Activated CD8-positive, alpha-beta T cell treated with anti-CD3 and anti-CD28 coated beads, Interleukin-2, amount 10 ng/mL, durations not matched to agents 7 days and 5 days (primary cell): ENCODE measurements at regions of chr21 and their contacts with region 1.

Region 1: GRCh38 chr21:37257967-37258877 is 8.9 kb downstream of the VPS26C start:
- DNase-seq: peak; percentile 94
- ATAC-seq: peak; percentile 86
- H3K4me3 Mint-ChIP-seq: peak overlapping the region; percentile 83
- H3K27ac Mint-ChIP-seq: peak overlapping the region; percentile 93
- H3K4me1 Mint-ChIP-seq: peaks cover 68% of the 10 kb centered on the region
- H3K27me3 Mint-ChIP-seq: no peaks in the 10 kb centered on the region

Region 2: GRCh38 chr21:37130971-37131370 is 127.3 kb before region 1 on chr21:
- CTCF ChIA-PET with region 1: no interaction called
- POLR2A ChIA-PET with region 1: no interaction called
- DNase-seq: no peak
- ATAC-seq: no peak
- H3K4me3 Mint-ChIP-seq: no peak overlapping the region
- H3K27ac Mint-ChIP-seq: no peak overlapping the region
- H3K4me1 Mint-ChIP-seq: peaks cover 10% of the 10 kb centered on the region
- H3K27me3 Mint-ChIP-seq: no peaks in the 10 kb centered on the region

Region 3: DNA sequence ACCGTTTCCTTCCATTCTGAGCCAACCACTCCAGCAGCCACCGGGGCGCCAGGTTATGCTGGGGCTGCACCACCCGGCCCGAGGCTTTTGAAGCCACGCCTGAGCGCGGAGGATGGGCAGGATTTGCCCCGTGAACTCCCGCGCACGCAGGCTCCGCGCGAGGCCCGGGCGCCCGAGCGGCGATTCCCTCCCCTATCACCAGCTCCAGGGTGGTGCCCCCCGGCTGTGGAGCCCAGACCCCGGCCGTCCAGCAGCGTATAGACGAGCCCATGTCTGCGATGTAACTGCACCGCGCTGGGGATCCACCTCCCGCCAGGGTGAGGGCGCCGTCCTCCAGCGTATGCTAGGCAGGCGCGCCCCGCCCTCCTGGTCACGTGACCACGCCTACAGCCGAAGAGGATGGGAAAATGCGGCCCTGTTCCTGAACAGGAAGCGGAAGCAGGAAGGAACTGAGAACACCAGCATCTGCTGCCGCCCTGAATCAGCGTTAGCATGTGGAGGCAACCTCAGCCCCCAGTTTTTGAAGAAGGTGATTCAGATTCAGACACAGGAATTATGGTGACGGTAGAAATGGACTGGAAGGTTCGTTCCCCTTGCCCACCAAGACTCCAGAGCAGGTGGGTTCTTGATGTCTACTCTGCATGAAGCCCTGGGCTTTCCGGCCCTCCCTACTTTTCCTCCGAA is 37.1 kb before region 1 on chr21:
- CTCF ChIA-PET with region 1: interaction called, 5 read pairs
- POLR2A ChIA-PET with region 1: interaction called, 20 read pairs
- DNase-seq: peak; percentile 96
- ATAC-seq: peak; percentile 81
- H3K4me3 Mint-ChIP-seq: peak overlapping the region; percentile 88
- H3K27ac Mint-ChIP-seq: peak overlapping the region; percentile 91
- H3K4me1 Mint-ChIP-seq: peaks cover 63% of the 10 kb centered on the region
- H3K27me3 Mint-ChIP-seq: no peaks in the 10 kb centered on the region

Region 4: GRCh38 chr21:37244501-37245083 is 13.6 kb before region 1 on chr21:
- CTCF ChIA-PET with region 1: interaction called, 36 read pairs
- POLR2A ChIA-PET with region 1: interaction called, 28 read pairs
- DNase-seq: peak; percentile 71
- ATAC-seq: peak; percentile 89
- H3K4me3 Mint-ChIP-seq: peak overlapping the region; percentile 78
- H3K27ac Mint-ChIP-seq: peak overlapping the region; percentile 94
- H3K4me1 Mint-ChIP-seq: peaks cover 88% of the 10 kb centered on the region
- H3K27me3 Mint-ChIP-seq: no peaks in the 10 kb centered on the region

Region 5: GRCh38 chr21:37366482-37367316 is 108.5 kb after region 1 on chr21 and contains the start of gene DYRK1A:
- CTCF ChIA-PET with region 1: interaction called, 4 read pairs
- POLR2A ChIA-PET with region 1: interaction called, 28 read pairs
- DNase-seq: peak; percentile 99
- ATAC-seq: peak; percentile 81
- H3K4me3 Mint-ChIP-seq: peak within 1 kb of the TSS; percentile 98
- H3K27ac Mint-ChIP-seq: peak within 1 kb of the TSS; percentile 100
- H3K4me1 Mint-ChIP-seq: peaks cover 47% of the 10 kb centered on the region
- H3K27me3 Mint-ChIP-seq: no peaks in the 10 kb centered on the region
- total RNA-seq, gene DYRK1A: 83.2 to 86.1 TPM